Activated T-helper 1 cell treated with anti-CD3 and anti-CD28 coated beads, Interleukin-12 subunit alpha, Interleukin-12 subunit beta, Interleukin-2, Interleukin-4 antibody, amounts not matched to agents 30 ng/mL and 10 ng/mL and 1 ng/mL, durations not matched to agents 14 hours and 24 hours and 36 hours (primary cell): ENCODE measurements at regions of chr15 and their contacts with region 1.

Region 1: DNA sequence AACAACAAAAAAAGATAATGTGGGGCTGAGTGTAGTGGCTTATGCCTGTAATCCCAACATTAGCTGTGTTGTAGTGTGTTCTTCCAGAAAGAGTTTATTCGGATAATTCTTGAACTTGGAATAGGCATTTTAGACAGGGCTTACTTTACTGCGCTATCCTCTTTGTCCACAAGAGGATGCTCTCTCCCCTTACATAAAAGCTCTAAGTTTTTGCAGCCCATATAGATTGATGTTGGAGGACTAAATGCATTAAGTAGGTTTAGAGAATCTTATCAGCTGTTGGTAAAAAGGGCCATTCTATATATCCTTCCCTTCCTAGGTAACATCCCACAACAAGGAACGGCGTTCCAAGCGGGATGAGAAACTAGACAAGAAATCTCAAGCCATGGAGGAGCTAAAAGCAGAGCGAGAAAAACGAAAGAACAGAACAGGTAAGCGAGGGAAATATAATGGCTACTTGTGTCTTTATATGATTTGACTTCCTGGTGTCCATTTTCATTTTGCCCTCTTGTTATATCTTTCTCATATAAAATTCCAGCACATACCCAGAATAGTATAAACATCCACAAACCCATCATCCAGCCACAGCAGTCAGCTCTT is 27.8 kb upstream of the ITPKA start:
- DNase-seq: no peak
- H3K4me3 Mint-ChIP-seq: no peak overlapping the region
- H3K27ac Mint-ChIP-seq: no peak overlapping the region
- H3K4me1 Mint-ChIP-seq: peaks cover 15% of the 10 kb centered on the region
- H3K27me3 Mint-ChIP-seq: no peaks in the 10 kb centered on the region

Region 2: GRCh38 chr15:41512940-41513510 is 47.1 kb after region 1 on chr15:
- intact Hi-C with region 1: loop called (anchors 2 kb)
- DNase-seq: peak; percentile 23
- H3K4me3 Mint-ChIP-seq: peak overlapping the region; percentile 66
- H3K27ac Mint-ChIP-seq: no peak overlapping the region
- H3K4me1 Mint-ChIP-seq: peaks cover 24% of the 10 kb centered on the region
- H3K27me3 Mint-ChIP-seq: peaks cover 36% of the 10 kb centered on the region

Region 3: GRCh38 chr15:41557673-41558399 is 91.9 kb after region 1 on chr15:
- intact Hi-C with region 1: loop called (anchors 5 kb)
- DNase-seq: peak; percentile 43
- H3K4me3 Mint-ChIP-seq: peak overlapping the region; percentile 92
- H3K27ac Mint-ChIP-seq: peak overlapping the region; percentile 89
- H3K4me1 Mint-ChIP-seq: peaks cover 19% of the 10 kb centered on the region
- H3K27me3 Mint-ChIP-seq: peaks cover 46% of the 10 kb centered on the region

Region 4: GRCh38 chr15:41603941-41604911 is 138.3 kb after region 1 on chr15:
- intact Hi-C with region 1: loop called (anchors 1 kb)
- DNase-seq: peak; percentile 27
- H3K4me3 Mint-ChIP-seq: peak overlapping the region; percentile 68
- H3K27ac Mint-ChIP-seq: no peak overlapping the region
- H3K4me1 Mint-ChIP-seq: peaks cover 11% of the 10 kb centered on the region
- H3K27me3 Mint-ChIP-seq: peaks cover 34% of the 10 kb centered on the region

Region 5: GRCh38 chr15:41811432-41812195 is 345.7 kb after region 1 on chr15:
- intact Hi-C with region 1: loop called (anchors 1 kb)
- DNase-seq: peak; percentile 61
- H3K4me3 Mint-ChIP-seq: no peak overlapping the region
- H3K27ac Mint-ChIP-seq: no peak overlapping the region
- H3K4me1 Mint-ChIP-seq: peaks cover 24% of the 10 kb centered on the region
- H3K27me3 Mint-ChIP-seq: no peaks in the 10 kb centered on the region

Region 6: DNA sequence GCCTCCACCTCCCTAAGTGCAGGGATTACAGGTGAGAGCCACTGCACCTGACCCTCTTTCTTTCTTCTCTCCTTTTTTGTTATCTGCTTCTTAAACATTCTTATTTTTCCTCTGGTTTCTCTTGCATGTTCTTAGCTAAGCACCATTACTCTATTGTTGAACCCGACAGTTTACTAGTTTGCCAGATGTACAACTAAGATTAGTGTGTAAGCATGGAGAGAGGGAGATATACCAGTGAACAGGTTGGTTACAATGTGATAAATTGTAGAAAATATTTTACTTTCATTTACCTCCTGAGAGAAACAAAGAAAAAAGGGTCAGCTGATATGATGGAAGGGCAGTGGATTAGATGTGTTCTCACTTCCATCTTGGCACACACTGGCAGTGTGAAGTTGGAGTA is 1087.6 kb after region 1 on chr15:
- intact Hi-C with region 1: no loop called
- DNase-seq: no peak
- H3K4me3 Mint-ChIP-seq: no peak overlapping the region
- H3K27ac Mint-ChIP-seq: no peak overlapping the region
- H3K4me1 Mint-ChIP-seq: peaks cover 30% of the 10 kb centered on the region
- H3K27me3 Mint-ChIP-seq: no peaks in the 10 kb centered on the region